Right ventricle myocardium superior (tissue), 1 donor: ENCODE measurements at regions of chr12 and their contacts with region 1.

Region 1: DNA sequence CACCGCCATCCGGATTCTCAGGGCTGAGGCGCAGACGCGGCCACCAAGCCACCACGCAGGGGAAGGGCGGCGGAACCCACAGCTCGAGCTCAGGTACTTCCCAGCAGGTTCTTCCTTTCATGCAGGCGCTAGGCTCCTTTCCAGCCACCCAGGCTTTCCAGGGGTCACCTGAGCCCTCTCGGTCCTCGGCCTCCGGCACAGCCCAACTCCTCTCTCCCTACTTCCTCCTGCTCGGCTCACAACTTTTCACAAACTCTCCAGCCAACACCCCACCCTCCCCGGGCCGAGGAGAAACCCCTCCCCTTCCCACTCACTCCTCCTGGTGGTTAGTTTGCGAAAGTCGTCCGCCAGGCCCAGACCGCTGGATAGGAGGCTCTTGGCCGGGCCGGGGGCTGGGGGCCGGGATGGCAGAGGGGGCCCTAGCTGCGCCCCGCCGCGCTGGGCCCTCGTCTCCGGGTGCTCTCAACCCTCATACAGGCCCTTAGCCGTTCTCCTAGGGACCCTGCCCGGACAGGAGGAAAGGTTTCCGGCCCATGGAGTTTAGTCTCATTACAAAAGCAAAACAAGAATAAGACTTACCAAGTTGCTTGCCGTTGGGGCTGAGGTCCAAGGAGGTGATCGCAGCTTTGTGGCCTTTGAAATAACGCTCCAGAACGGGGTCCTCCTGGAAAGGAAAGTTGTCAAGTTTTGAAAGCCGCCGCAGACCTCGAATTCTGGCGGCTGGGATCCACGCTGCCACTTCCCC is at the start of gene GALNT4:
- DNase-seq: peak; percentile 91
- ATAC-seq: peak; percentile 96
- total RNA-seq, gene GALNT4: 2.2 TPM

Region 2: GRCh38 chr12:89040146-89040964 is 484.4 kb before region 1 on chr12:
- intact Hi-C with region 1: loop called (anchors 10 kb)
- DNase-seq: peak; percentile 46
- ATAC-seq: no peak

Region 3: DNA sequence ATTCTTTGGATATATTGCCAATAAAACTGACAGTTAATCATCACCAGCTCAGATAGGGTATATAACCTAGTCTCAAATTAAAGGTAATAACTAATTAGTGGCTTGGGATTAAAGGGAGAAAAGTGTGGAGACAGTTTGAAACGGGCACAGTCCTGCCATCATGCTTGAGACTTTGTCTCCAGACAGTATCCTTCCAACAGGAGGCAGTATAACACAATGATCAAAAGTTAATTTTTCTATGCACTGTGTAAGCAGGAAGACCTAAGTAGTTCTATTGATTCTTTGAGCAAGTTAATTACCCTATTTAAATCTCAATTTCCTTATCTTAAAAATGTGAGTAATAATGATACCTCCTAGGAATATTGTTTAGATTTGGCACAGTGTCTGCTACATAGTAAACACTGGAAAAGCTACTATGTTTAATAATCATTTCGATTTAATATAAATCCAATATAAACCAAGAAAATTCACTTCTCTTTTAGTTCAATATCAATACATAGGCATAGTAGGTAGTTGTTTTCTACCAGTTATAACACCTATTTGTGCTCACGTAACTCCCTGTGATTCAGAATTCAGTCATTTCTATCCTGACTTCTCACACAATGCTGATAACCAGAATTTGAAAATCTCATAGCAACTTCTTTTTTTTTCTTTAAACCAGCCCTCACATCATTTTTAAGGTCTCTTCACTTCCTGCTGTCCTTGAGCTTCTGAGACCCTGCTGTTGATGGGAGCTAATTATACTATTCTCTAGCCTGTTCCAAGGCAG is 53.8 kb before region 1 on chr12:
- intact Hi-C with region 1: loop called (anchors 5 kb)
- DNase-seq: no peak
- ATAC-seq: peak; percentile 79

Region 4: DNA sequence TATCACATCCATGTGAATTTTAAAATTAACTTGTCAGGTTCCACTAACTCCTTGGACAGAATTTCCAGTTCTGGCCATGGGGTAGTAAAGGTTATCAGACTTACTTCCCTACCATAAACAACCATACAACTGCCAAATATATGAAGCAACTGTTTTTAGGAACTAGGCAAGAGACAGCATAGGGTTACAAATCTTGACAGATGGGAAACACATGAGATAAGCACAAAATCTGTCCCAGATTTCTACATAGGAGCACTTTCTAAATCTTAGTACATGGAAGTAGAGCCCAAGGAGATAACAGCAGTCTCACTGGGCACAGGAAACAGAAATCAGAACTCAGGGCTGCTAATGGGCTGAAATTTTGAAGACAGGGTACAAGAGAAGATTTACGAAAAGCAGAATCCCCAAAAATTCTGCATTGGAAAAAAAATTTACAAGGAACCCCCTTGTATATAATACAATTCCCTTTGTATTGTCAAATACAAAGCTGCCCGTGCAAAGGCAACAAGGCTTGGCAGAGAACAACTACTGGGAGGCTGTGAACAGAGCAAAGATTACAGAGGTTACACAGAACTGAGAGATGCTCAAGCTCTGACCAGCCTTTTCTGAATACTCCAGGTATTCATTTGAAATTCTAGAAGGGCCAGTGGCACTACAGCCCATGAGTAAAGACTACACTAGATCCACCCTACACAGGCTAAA is 43.3 kb before region 1 on chr12:
- intact Hi-C with region 1: no loop called
- DNase-seq: no peak
- ATAC-seq: no peak